Panc1 (cell line): ENCODE measurements at regions of chrX and their contacts with region 1.

Region 1: DNA sequence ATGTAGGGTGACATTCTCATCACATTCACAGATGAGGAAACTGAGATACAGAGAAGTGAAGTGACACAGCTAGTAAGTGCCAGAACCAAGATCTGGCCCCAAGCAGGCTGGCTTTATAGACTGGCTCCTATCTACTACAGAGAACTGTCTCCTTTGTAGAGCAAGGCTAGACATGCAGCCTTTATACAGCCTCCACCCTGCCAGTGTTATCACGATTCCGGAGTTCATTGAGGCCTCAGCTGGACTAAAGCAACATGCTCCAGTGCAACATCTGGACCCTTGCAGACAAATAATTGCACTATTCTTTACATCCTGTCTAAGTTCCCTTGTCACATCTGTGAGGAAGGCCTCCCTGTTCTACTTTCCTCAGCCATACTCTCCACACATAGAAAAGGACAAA is 58.0 kb upstream of the XIAP start:
- DNase-seq: no peak
- ATAC-seq: no peak
- H3K4me3 ChIP-seq: no peak overlapping the region
- H3K27ac ChIP-seq: no peak overlapping the region
- H3K4me1 ChIP-seq: peaks cover 8% of the 10 kb centered on the region
- H3K27me3 ChIP-seq: no peaks in the 10 kb centered on the region
- CTCF ChIP-seq: no peak

Region 2: DNA sequence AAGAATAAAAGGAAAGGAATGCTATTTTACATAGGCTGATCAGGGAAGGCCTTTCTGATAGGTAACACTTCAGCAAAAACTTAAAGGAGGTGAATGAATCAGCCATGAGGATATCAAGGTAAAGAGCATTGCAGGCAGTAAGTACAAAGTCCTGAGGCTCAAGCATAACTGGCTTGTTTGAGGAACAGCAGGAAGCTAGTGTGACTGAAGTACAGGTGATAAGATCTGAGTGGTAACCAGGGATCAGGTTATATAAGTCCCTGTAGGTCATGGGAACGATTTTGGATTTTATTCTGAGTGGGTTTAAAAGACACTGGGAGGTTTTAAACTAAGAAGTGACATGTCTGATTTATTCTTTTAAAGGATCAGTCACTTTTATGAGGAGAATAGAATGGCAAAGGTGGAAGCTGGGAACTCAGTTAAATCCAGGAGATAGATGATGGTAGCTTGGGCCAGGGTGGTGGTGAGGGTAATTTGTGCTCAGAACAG is 21.9 kb before region 1 on chrX:
- CTCF ChIA-PET with region 1: interaction called, 13 read pairs
- POLR2A ChIA-PET with region 1: interaction called, 4 read pairs
- in situ Hi-C with region 1: no loop called
- intact Hi-C with region 1: no loop called
- DNase-seq: no peak
- ATAC-seq: no peak
- H3K4me3 ChIP-seq: no peak overlapping the region
- H3K27ac ChIP-seq: no peak overlapping the region
- H3K4me1 ChIP-seq: no peaks in the 10 kb centered on the region; the same call in 1 of the 2 replicates
- H3K27me3 ChIP-seq: no peaks in the 10 kb centered on the region
- CTCF ChIP-seq: no peak